ENCODE measurements at regions of chr3 and their contacts with region 1.

Region 1: DNA sequence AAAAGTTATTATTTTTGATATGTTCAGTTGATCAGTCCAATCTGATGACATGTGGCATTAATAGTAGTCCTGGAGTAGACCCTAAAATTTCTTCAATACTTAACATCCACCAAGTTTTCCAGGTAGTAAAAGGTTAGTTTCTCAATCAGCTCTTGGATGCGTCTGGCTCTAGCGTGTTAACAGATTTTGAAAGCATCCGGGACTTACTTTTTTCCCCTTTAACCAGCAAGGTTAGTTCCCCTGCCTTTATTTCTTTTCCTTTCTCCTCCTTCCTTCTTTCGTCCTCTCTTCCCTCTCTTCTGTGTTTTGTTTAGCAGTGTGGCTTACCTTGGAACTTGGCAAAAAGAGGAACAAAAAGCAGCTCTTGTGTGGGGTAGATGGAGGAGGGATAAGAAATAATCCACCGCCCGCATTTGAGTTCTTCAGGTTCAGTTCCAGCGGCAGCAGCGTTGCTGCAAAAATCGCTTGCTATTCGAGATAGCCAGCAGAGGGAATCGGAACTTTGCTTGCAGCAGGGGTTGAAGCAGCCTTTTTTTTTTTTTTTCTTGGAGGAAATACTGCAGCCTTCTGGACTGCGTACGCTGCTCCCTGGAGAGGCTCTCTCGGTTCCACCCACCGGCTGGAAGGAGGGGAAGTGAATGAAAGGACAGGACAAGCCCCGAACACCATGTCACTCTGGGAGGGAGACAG is at the start of gene RBMS3:
- DNase-seq: peak; percentile 86
- H3K4me3 ChIP-seq: peak within 1 kb of the TSS; percentile 78
- CTCF ChIP-seq: peak; percentile 61

Region 2: DNA sequence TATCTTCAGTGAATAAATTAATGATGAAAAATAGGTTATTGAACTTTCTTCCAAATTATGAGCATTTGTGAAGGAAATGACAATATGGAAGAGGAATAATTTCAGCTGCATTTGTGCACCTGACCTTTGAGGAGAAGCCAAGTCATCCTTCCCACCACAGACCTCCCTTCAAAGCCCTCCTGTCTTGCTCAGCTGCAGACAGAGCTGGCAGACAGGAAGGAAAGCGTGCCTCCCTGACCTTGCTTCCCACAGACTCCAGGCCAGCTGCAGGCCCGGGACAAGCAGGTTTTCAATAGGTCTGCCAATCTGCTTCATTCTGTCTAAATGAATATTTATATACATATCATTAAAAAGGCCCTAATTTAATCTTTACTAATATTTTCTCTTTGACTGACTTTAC is 152.5 kb before region 1 on chr3:
- CTCF ChIA-PET with region 1: no interaction called
- POLR2A ChIA-PET with region 1: no interaction called
- DNase-seq: no peak
- H3K4me3 ChIP-seq: no peak overlapping the region
- CTCF ChIP-seq: no peak

Region 3: GRCh38 chr3:29186982-29187725 is 93.4 kb before region 1 on chr3:
- CTCF ChIA-PET with region 1: no interaction called
- POLR2A ChIA-PET with region 1: interaction called, 11 read pairs
- DNase-seq: no peak
- H3K4me3 ChIP-seq: no peak overlapping the region
- CTCF ChIP-seq: no peak

Region 4: DNA sequence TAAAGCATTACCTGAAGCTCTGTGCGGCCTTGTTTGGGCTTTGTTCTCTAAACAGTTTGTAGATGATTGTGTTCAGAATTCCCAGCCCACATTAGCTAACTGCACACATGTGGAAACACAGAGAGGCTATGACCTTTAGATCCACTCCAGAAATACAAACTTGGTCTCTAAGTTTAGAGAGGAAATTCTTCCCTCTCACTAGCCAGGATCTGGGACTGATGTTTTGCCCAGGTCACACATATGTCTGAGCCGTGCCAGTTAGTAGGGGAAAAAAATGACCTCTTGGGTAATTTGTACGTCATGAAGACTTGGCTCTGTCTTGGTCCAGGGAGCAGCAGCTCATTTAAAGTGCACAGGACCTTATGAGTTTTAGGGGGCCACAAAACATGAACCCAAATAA is 223.4 kb after region 1 on chr3:
- CTCF ChIA-PET with region 1: no interaction called
- POLR2A ChIA-PET with region 1: no interaction called
- DNase-seq: no peak
- H3K4me3 ChIP-seq: no peak overlapping the region
- CTCF ChIP-seq: no peak

Measured in AG04449 (cell line).